Activated T-helper 1 cell treated with anti-CD3 and anti-CD28 coated beads, Interleukin-12 subunit alpha, Interleukin-12 subunit beta, Interleukin-2, Interleukin-4 antibody, amounts not matched to agents 30 ng/mL and 10 ng/mL and 1 ng/mL, durations not matched to agents 14 hours and 24 hours and 36 hours (primary cell): ENCODE measurements at regions of chr11 and their contacts with region 1.

Region 1: DNA sequence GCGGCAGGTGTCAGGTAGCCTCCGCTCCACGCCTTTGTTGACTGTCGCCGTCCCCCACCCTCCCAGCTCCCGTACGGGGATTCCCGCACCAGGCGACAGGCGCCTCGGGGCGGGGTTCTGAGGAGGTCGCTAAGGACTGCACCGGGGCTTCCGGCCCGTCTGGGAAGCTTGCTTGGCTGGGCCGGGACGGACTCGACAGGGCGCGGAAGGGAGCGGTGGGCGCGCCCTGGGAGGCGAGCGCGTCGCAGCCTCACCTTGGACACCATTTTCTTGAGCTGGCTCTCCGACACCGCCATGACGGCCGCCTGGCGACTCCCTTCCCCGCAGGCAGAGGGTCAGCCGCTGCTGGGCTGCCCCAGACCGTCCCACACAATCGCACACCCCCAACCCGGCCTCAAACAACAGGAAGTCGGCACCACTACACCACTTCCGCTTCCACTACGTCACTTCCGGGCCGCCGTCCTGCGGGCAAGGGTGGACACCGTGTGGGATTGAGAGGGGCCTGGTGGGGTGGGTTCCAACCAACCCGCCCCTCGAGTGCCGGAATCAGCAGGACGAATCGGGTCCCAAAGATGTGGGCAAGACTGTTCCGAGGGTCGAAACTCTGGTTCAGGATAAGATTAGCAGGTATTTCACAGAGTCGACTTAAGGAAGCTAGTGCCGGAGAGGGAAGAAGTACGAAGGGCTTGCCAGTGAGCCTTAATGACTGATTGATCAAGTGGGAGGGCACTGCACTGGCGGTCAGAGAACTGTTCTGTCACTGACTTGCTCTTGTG is at the start of gene TSG101:
- DNase-seq: peak; percentile 92
- H3K4me3 Mint-ChIP-seq: peak within 1 kb of the TSS; percentile 97
- H3K27ac Mint-ChIP-seq: peak within 1 kb of the TSS; percentile 100
- H3K4me1 Mint-ChIP-seq: peaks cover 36% of the 10 kb centered on the region
- H3K27me3 Mint-ChIP-seq: peaks cover 4% of the 10 kb centered on the region
- total RNA-seq, gene TSG101: 41.8 and 49.7 TPM in 2 replicates

Region 2: GRCh38 chr11:18012863-18013781 is 513.6 kb before region 1 on chr11 and contains the start of gene SERGEF:
- intact Hi-C with region 1: loop called (anchors 5 kb)
- DNase-seq: peak; percentile 92
- H3K4me3 Mint-ChIP-seq: peak within 1 kb of the TSS; percentile 97
- H3K27ac Mint-ChIP-seq: peak within 1 kb of the TSS; percentile 98
- H3K4me1 Mint-ChIP-seq: peaks cover 44% of the 10 kb centered on the region
- H3K27me3 Mint-ChIP-seq: peaks cover 5% of the 10 kb centered on the region
- total RNA-seq, gene SERGEF: 24.5 and 32.8 TPM in 2 replicates

Region 3: GRCh38 chr11:18321980-18322711 is 204.6 kb before region 1 on chr11 and contains the starts of genes GTF2H1 and HPS5:
- intact Hi-C with region 1: loop called (anchors 1 kb)
- DNase-seq: peak; percentile 95
- H3K4me3 Mint-ChIP-seq: peak within 1 kb of the TSS; percentile 93
- H3K27ac Mint-ChIP-seq: peak within 1 kb of the TSS; percentile 99
- H3K4me1 Mint-ChIP-seq: peaks cover 70% of the 10 kb centered on the region
- H3K27me3 Mint-ChIP-seq: no peaks in the 10 kb centered on the region
- total RNA-seq, gene GTF2H1: 52.2 and 56.9 TPM in 2 replicates
- total RNA-seq, gene HPS5: 19.9 and 21.4 TPM in 2 replicates

Region 4: DNA sequence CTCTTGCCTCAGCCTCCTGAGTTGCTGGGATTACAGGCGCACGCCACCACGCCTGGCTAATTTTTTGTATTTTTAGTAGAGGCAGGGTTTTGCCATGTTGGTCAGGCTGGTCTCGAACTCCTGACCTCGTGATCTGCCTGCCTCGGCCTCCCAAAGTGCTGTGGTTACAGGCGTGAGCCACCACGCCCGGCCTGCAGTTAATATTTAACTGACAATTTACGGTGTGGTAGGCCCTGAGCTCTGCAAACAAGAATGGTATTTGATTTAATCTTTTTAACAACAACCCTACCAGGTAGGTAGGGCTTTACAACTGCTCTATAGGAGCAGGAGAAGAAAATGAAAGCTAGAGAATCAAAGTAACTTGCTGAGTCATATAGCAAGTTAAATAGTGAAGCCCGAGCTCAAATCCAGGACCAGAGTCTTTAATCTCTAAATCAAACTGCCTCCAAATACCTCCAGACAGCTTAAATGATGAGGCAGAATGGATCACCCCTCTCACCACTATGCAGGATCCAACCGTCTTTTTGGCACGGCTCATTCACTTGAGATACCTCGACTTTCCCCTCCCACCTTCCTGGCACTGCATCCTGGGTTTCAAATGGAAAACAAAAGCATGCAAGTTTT is 52.4 kb after region 1 on chr11:
- intact Hi-C with region 1: loop called (anchors 2 kb)
- DNase-seq: peak; percentile 21
- H3K4me3 Mint-ChIP-seq: peak overlapping the region; percentile 61
- H3K27ac Mint-ChIP-seq: peak overlapping the region; percentile 80
- H3K4me1 Mint-ChIP-seq: peaks cover 65% of the 10 kb centered on the region
- H3K27me3 Mint-ChIP-seq: no peaks in the 10 kb centered on the region

Region 5: DNA sequence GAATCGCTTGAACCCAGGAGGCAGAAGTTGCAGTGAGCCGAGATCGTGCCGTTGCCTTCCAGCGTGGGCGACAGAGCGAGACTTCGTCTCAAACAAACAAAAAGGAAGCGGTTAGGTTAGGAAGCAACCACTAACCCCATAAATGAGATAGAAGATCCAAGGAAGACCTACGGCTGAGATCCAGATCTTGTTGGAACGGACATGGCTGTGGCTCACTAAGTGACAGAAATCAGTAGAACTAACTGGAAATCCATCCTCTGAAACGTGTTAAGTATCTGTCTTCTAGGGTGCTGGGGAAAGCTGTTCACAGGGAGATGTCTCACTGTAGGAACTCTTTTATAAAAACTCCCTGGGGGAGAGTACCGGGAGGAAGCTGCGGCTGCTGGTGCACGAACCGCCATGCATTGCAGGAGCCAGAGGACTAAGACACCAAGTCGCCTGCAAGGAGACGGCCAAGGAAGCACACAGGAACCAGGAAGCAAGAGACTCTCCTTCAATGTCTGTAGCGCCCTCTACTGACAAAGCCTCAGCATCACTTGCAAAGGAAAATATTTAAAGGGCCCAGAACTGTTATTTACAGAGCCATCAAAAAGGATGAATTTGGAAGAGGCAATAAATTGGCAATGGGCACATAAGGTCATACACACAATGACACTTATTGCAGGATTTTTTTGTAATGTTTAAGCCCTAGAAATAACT is 124.3 kb after region 1 on chr11:
- intact Hi-C with region 1: loop called (anchors 5 kb)
- DNase-seq: peak; percentile 47
- H3K4me3 Mint-ChIP-seq: no peak overlapping the region
- H3K27ac Mint-ChIP-seq: no peak overlapping the region
- H3K4me1 Mint-ChIP-seq: peaks cover 13% of the 10 kb centered on the region
- H3K27me3 Mint-ChIP-seq: no peaks in the 10 kb centered on the region

Region 6: GRCh38 chr11:18731949-18732821 is 205.5 kb after region 1 on chr11:
- intact Hi-C with region 1: loop called (anchors 1 kb)
- DNase-seq: peak; percentile 47
- H3K4me3 Mint-ChIP-seq: no peak overlapping the region
- H3K27ac Mint-ChIP-seq: no peak overlapping the region
- H3K4me1 Mint-ChIP-seq: no peaks in the 10 kb centered on the region
- H3K27me3 Mint-ChIP-seq: no peaks in the 10 kb centered on the region

Region 7: DNA sequence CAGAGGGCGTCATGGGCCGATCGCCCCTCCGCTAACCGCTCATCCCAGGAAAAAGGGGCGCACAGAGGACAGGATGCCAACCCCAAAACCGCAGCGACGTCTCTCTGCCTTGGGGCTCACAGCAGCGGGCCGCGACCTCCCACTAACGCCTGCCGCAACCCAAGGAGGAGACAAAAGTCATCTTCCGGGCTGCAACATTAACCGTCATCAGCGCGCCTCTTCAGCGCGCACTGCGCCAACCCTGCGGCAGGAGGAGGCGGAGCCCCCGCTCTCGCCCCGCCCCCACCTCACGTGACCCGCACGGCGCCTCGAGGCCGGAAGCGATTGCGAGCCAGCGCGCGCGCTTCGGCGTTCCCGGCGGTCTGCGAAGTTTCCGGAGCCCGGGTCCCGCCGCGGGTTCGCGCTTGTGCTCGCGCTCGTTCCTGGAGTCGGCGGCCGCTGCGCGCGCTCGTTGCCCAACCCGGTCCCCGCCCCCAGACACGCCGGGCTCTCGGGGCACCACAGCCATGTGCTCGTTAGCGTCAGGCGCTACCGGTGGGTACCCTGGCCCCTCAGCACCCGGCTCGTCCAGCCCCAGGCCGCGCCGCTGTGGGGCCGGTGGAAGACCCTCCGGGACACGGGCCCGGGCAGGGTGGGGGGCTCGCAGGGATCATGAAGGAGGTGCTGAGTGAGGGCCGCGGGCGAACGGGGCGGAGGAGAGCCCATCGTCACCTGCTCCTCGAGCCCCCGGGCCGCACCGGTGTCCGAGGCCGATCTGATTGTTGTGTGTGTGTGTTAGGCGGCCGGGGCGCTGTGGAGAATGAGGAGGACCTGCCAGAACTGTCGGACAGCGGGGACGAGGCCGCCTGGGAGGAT is 1860.8 kb after region 1 on chr11 and contains the start of gene PRMT3:
- intact Hi-C with region 1: loop called (anchors 5 kb)
- DNase-seq: peak; percentile 97
- H3K4me3 Mint-ChIP-seq: peak within 1 kb of the TSS; percentile 98
- H3K27ac Mint-ChIP-seq: peak within 1 kb of the TSS; percentile 98
- H3K4me1 Mint-ChIP-seq: peaks cover 12% of the 10 kb centered on the region
- H3K27me3 Mint-ChIP-seq: no peaks in the 10 kb centered on the region
- total RNA-seq, gene PRMT3: 43.7 and 45.5 TPM in 2 replicates